Cardiac septum (tissue), 1 donor: ENCODE measurements at regions of chr7 and their contacts with region 1.

Region 1: DNA sequence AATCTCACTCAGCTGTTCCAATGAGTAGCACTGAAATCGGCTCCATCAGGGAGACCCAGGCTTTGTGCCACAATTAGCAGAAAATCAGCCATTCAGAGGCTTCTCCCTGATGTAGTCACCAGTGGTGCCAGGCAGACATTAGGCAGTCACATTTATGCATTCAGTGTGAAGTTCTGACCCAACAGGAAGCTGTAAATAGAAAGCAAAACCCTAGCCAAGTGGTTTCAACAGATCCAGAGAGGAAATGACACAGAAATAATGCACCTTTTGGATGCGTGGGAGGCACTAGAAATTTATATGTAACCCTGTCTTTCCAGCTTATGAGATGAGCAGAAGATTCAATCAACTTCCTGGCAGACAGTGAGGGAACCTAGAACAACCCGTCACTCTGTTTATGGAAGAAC is 186.4 kb downstream of the PDE1C start:
- DNase-seq: no peak

Region 2: GRCh38 chr7:32059289-32060011 is 175.7 kb after region 1 on chr7:
- intact Hi-C with region 1: loop called (anchors 5 kb)
- DNase-seq: no peak

Region 3: GRCh38 chr7:32070406-32071360 is 186.9 kb after region 1 on chr7 and contains the start of gene PDE1C:
- intact Hi-C with region 1: loop called (anchors 2 kb)
- DNase-seq: peak; percentile 86
- total RNA-seq, gene PDE1C: 220 TPM

Region 4: GRCh38 chr7:32164346-32164957 is 280.7 kb after region 1 on chr7:
- intact Hi-C with region 1: loop called (anchors 5 kb)
- DNase-seq: no peak